Breast epithelium (tissue), 4 donors: ENCODE measurements at regions of chr2 and their contacts with region 1.

Region 1: GRCh38 chr2:83369601-83370418 is 1089.3 kb downstream of the SUCLG1 start:
- DNase-seq: no peak
- H3K4me3 ChIP-seq: no peak overlapping the region
- H3K27ac ChIP-seq: no peak overlapping the region
- H3K4me1 ChIP-seq: no peaks in the 10 kb centered on the region
- H3K27me3 ChIP-seq: no peaks in the 10 kb centered on the region
- CTCF ChIP-seq: no peak
- POLR2A ChIP-seq: no peak

Region 2: DNA sequence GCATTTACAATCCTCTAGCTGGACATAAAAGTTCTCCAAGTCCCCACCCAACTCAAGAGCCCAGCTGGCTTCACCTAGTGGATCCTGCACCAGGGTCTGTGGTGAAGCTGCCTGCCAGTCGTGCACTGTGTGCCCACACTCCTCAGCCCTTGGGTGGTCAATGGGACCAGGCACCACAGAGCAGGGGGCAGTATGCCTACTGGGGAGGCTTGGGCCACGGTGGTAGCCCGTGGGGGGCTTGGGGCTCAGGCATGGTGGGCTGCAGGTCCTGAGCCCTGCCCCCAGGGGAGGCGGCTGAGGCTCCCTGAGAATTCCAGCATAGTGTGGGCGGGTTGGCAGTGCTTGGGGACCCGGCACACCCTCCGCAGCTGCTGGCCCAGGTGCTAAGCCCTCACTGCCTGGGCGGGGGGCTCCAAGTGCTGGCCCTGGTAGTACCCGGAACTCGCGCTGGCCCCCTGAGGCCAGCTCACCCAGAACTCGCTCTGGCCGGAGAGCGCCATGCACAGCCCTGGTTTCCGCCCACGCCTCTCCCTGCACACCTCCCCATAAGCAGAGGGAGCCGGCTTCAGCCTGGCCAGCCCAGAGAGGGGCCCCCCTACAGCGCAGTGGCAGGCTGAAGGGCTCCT is 384.1 kb before region 1 on chr2:
- intact Hi-C with region 1: no loop called
- DNase-seq: no peak
- H3K4me3 ChIP-seq: no peak overlapping the region
- H3K27ac ChIP-seq: no peak overlapping the region
- H3K4me1 ChIP-seq: no peaks in the 10 kb centered on the region
- H3K27me3 ChIP-seq: peaks cover 0 to 10% of the 10 kb centered on the region in 2 donors
- CTCF ChIP-seq: no peak
- POLR2A ChIP-seq: no peak

Region 3: GRCh38 chr2:84187258-84187657 is 817.4 kb after region 1 on chr2:
- intact Hi-C with region 1: loop called (anchors 5 kb)
- DNase-seq: no peak
- H3K4me3 ChIP-seq: no peak overlapping the region
- H3K27ac ChIP-seq: no peak overlapping the region
- H3K4me1 ChIP-seq: no peaks in the 10 kb centered on the region
- H3K27me3 ChIP-seq: no peaks in the 10 kb centered on the region
- CTCF ChIP-seq: no peak
- POLR2A ChIP-seq: no peak